Activated CD8-positive, alpha-beta T cell treated with anti-CD3 and anti-CD28 coated beads, Interleukin-2, amount 10 ng/mL, durations not matched to agents 7 days and 5 days (primary cell): ENCODE measurements at regions of chr6 and their contacts with region 1.

Region 1: DNA sequence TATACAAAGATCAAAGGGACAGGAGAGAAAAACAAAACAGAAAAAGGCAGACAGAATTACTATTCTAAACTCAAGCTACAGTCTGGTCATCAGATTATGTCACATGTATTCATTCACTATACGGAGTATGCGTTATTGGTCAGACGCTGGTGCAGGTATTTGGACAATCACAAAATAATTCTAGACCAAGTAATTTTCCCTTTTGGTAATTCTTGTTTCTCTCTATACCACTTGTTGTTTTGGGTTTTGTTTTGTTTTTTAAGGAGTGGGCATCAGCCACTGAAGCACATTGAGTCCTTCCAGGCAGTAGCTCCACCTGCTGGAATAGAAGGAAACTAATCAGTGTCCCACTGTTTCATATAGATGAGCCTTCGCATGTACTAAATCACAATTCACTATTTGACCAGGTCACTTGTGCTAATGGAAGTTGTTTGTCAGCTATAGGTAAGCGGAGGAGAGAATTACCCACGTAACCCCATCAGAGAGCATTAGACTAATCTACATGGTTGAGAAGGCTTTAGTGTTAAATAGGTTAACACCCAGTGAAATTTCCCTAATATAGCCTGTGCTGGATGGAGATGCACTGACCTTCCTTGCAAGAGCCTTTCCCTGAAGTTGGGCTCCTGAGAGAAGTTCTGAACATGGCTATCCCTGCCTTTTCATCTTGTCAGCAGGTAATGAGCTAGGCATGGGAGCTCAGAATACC is 77.9 kb downstream of the TNFAIP3 start:
- DNase-seq: no peak
- ATAC-seq: peak; percentile 65
- H3K4me3 Mint-ChIP-seq: no peak overlapping the region
- H3K27ac Mint-ChIP-seq: no peak overlapping the region
- H3K4me1 Mint-ChIP-seq: peaks cover 24% of the 10 kb centered on the region
- H3K27me3 Mint-ChIP-seq: no peaks in the 10 kb centered on the region

Region 2: DNA sequence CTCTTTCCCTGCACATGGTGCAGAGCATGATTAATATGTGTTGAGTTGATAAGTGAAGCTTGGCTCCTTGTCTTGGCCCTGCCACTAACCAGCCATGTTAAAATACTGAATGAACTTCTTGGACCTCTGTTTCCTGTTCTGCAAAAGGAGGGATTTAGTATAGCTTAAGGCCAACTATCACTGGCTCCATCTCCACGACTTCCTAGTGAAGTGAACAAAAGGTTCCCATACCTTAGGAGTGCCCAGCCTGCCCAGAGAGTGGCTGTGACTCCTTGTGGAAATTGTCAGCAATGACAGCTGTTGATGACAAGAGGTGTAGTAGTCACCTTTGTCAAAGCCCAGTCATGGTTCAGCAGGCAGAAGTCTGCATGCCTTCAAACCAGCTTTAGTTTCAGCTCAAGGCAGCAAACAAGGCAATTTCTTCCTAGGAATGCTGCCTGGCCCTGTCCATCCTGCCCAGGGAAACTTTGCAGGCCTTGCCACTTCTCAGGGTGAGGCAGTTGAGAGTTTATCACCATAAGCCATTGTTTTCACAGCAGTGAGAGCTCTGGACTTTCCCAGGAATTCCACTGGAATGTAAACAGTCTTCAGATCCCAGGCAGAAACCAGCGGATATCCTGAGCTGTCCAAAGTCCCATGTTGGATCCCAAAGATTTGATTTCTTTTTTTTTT is 247.5 kb before region 1 on chr6:
- CTCF ChIA-PET with region 1: interaction called, 33 read pairs
- POLR2A ChIA-PET with region 1: no interaction called
- DNase-seq: no peak
- ATAC-seq: peak; percentile 17
- H3K4me3 Mint-ChIP-seq: no peak overlapping the region
- H3K27ac Mint-ChIP-seq: no peak overlapping the region
- H3K4me1 Mint-ChIP-seq: peaks cover 38% of the 10 kb centered on the region
- H3K27me3 Mint-ChIP-seq: peaks cover 5% of the 10 kb centered on the region

Region 3: DNA sequence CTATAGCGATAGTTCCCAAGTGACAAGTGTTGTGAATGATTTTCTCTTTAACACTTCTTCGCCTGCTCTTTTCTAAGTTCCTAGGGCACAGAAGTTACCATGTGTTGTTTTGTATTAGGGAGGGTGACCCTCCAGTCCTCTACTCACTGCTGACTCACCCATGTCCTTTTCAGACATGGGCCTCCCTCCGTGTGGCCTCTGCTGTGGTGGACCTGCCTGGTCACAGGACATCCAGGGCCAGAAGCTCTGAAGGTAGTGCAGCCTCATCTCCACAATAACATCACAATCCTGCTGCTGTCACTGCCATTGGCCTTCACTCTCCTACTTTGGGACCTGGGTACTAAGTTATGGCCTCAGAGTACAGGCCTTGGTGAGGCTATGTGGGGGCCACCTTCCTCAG is 165.0 kb before region 1 on chr6:
- CTCF ChIA-PET with region 1: no interaction called
- POLR2A ChIA-PET with region 1: no interaction called
- DNase-seq: no peak
- ATAC-seq: no peak
- H3K4me3 Mint-ChIP-seq: no peak overlapping the region
- H3K27ac Mint-ChIP-seq: no peak overlapping the region
- H3K4me1 Mint-ChIP-seq: no peaks in the 10 kb centered on the region
- H3K27me3 Mint-ChIP-seq: peaks cover 2% of the 10 kb centered on the region

Region 4: DNA sequence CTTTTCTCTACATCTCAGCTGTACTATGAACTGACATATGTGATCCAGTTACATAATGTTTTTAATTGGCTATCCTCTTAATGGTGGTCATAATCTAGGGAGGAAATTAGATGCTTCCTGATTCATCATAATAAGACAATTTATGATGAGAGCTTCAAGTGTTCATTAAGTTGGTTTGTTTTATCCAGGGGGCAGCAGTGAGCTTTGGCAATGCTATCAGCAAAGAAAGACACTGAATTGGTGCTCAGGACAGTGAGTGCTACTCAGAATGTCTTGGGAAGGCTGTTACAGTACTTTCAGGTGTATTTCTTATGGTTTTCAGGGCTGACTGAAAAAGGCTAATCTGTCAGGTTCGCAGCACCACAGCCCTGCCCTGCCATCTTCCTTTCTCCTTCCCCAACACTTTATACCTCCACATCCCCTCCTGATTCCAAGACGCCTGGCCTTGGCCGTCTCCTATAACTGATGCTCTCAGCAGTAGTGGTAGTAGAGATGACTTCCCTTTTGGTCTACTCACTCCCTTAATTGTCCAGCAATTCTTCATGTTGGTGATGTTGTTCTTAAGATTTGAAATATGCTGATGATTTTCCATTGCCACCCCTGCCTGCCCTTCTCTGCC is 144.9 kb before region 1 on chr6:
- CTCF ChIA-PET with region 1: interaction called, 49 read pairs
- POLR2A ChIA-PET with region 1: no interaction called
- DNase-seq: peak; percentile 75
- ATAC-seq: peak; percentile 74
- H3K4me3 Mint-ChIP-seq: no peak overlapping the region
- H3K27ac Mint-ChIP-seq: peak overlapping the region; percentile 60
- H3K4me1 Mint-ChIP-seq: peaks cover 64% of the 10 kb centered on the region
- H3K27me3 Mint-ChIP-seq: no peaks in the 10 kb centered on the region

Region 5: DNA sequence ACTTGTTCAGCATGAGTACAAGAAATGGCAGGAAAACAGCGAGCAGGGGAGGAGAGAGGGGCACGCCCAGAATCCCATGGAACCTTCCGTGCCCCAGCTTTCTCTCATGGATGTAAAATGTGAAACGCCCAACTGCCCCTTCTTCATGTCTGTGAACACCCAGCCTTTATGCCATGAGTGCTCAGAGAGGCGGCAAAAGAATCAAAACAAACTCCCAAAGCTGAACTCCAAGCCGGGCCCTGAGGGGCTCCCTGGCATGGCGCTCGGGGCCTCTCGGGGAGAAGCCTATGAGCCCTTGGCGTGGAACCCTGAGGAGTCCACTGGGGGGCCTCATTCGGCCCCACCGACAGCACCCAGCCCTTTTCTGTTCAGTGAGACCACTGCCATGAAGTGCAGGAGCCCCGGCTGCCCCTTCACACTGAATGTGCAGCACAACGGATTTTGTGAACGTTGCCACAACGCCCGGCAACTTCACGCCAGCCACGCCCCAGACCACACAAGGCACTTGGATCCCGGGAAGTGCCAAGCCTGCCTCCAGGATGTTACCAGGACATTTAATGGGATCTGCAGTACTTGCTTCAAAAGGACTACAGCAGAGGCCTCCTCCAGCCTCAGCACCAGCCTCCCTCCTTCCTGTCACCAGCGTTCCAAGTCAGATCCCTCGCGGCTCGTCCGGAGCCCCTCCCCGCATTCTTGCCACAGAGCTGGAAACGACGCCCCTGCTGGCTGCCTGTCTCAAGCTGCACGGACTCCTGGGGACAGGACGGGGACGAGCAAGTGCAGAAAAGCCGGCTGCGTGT is 66.3 kb before region 1 on chr6:
- CTCF ChIA-PET with region 1: interaction called, 555 read pairs
- POLR2A ChIA-PET with region 1: interaction called, 12 read pairs
- DNase-seq: no peak
- ATAC-seq: no peak
- H3K4me3 Mint-ChIP-seq: no peak overlapping the region
- H3K27ac Mint-ChIP-seq: peak overlapping the region; percentile 46
- H3K4me1 Mint-ChIP-seq: peaks cover 75% of the 10 kb centered on the region
- H3K27me3 Mint-ChIP-seq: no peaks in the 10 kb centered on the region

Region 6: GRCh38 chr6:137933696-137934095 is 11.2 kb before region 1 on chr6:
- CTCF ChIA-PET with region 1: interaction called, 33 read pairs
- POLR2A ChIA-PET with region 1: interaction called, 4 read pairs
- DNase-seq: no peak
- ATAC-seq: no peak
- H3K4me3 Mint-ChIP-seq: no peak overlapping the region
- H3K27ac Mint-ChIP-seq: no peak overlapping the region
- H3K4me1 Mint-ChIP-seq: peaks cover 8% of the 10 kb centered on the region
- H3K27me3 Mint-ChIP-seq: no peaks in the 10 kb centered on the region

Region 7: GRCh38 chr6:137967689-137968454 is 22.9 kb after region 1 on chr6:
- CTCF ChIA-PET with region 1: interaction called, 15 read pairs
- POLR2A ChIA-PET with region 1: interaction called, 6 read pairs
- DNase-seq: no peak
- ATAC-seq: peak; percentile 25
- H3K4me3 Mint-ChIP-seq: no peak overlapping the region
- H3K27ac Mint-ChIP-seq: peak overlapping the region; percentile 64
- H3K4me1 Mint-ChIP-seq: peaks cover 47% of the 10 kb centered on the region
- H3K27me3 Mint-ChIP-seq: no peaks in the 10 kb centered on the region

Region 8: GRCh38 chr6:138001750-138002349 is 56.9 kb after region 1 on chr6:
- CTCF ChIA-PET with region 1: interaction called, 14 read pairs
- POLR2A ChIA-PET with region 1: no interaction called
- DNase-seq: peak; percentile 74
- ATAC-seq: peak; percentile 36
- H3K4me3 Mint-ChIP-seq: no peak overlapping the region
- H3K27ac Mint-ChIP-seq: no peak overlapping the region
- H3K4me1 Mint-ChIP-seq: peaks cover 14% of the 10 kb centered on the region
- H3K27me3 Mint-ChIP-seq: peaks cover 2% of the 10 kb centered on the region